MCF 10A (cell line): ENCODE measurements at regions of chr6 and their contacts with region 1.

Region 1: GRCh38 chr6:43477235-43478007 is at the start of gene TJAP1:
- DNase-seq: peak; percentile 88
- H3K4me3 Mint-ChIP-seq: peak within 1 kb of the TSS; percentile 86
- H3K27ac Mint-ChIP-seq: peak within 1 kb of the TSS; percentile 97
- H3K4me1 Mint-ChIP-seq: peaks cover 26% of the 10 kb centered on the region
- H3K27me3 Mint-ChIP-seq: no peaks in the 10 kb centered on the region
- CTCF ChIP-seq: no peak
- total RNA-seq, gene TJAP1: 70.9 and 78.9 TPM in 2 replicates

Region 2: DNA sequence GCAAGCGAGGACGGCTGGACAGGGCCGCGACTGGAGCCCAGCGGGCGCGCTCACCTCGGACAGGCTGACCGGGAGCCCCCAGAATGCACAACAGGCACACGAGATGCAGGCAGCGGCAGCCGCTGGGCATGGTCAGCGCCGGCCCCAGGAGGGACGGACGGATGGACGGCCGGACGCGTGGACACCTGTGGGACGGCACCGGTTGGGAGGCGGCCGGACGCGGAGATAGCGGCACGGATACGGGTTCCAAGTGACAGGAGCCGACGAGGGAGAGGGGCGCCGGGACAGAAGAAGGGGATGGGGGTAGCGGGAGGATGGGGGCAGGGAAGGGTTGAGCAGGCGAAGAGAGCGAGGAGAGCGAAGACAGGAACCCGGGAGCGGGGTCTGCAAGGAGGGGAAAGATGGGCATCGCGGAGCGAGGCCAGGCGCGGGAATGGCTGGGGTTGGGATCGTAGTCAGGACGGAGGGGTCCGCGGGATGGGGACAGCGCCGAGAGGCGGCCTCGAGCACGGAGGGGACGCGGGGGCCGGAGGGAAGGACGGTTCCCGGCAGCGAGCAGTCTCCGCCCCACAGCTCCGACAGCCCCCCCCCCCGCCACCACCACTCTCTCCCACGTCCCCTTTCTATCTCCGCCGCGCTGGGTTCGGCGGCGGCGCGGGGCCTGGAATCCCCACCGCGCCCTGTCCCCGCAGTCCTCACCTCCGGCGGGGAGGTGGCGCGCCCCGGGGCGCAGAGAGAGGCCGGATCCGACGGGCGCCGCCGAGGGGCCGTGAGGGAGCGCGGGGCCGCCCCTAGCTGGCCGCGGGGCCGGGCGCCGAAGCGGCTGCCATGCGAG is 22.5 kb before region 1 on chr6:
- CTCF ChIA-PET with region 1: interaction called, 3 read pairs
- POLR2A ChIA-PET with region 1: interaction called, 17 read pairs
- intact Hi-C with region 1: no loop called
- DNase-seq: peak; percentile 78
- H3K4me3 Mint-ChIP-seq: peak overlapping the region; percentile 83
- H3K27ac Mint-ChIP-seq: peak overlapping the region; percentile 27
- H3K4me1 Mint-ChIP-seq: peaks cover 15% of the 10 kb centered on the region
- H3K27me3 Mint-ChIP-seq: no peaks in the 10 kb centered on the region
- CTCF ChIP-seq: no peak

Region 3: DNA sequence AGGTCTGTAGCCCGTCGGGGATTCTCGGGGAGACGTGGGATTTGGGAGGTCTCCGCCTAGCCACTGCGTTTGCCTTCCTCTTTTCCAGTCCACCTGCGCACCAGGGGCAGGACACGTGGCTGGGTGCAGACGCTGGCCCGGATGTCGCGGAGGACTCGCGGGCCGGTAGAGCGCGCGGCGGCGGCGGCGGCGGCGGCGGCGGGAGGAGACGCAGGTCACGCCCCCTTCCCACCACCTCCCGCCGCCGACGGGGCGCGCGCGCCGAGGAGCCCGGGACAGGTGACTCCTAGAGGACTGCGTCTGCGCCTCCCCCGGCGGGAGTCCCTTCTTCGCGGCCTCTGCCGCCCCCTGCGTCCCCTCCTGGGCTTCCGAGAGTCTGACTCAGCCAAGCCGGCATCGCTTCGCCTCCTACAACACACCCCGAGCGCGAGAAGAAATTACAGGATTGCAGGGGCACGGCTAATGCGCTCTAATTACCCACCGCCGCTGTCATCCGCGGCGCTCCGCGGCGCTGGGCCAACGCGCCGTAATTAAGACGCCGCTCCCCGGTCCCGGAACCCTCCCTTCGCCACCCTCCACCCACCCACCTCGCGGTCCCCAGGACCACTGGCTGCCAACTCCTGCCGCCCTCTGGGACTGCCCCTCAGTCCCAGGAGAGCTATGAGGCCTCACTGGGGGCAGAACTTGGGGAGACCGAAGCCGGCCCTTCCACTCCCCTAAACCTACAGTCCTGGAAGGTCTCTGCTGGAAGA is 525.3 kb after region 1 on chr6:
- CTCF ChIA-PET with region 1: no interaction called
- POLR2A ChIA-PET with region 1: no interaction called
- intact Hi-C with region 1: no loop called
- DNase-seq: no peak
- H3K4me3 Mint-ChIP-seq: peak overlapping the region; percentile 8
- H3K27ac Mint-ChIP-seq: no peak overlapping the region
- H3K4me1 Mint-ChIP-seq: peaks cover 5% of the 10 kb centered on the region
- H3K27me3 Mint-ChIP-seq: no peaks in the 10 kb centered on the region
- CTCF ChIP-seq: no peak